PC-9 (cell line): ENCODE measurements at regions of chr22 and their contacts with region 1.

Region 1: GRCh38 chr22:43014869-43015676 is at the start of gene PACSIN2:
- DNase-seq: peak; percentile 97 to 99
- H3K4me3 ChIP-seq: peak within 1 kb of the TSS; percentile 66
- H3K27ac ChIP-seq: peak within 1 kb of the TSS; percentile 45
- H3K4me1 ChIP-seq: peaks cover 50% of the 10 kb centered on the region
- H3K27me3 ChIP-seq: no peaks in the 10 kb centered on the region
- CTCF ChIP-seq: no peak
- total RNA-seq, gene PACSIN2: 102 and 103 TPM in 2 replicates

Region 2: GRCh38 chr22:42313804-42314581 is 701.1 kb before region 1 on chr22:
- CTCF ChIA-PET with region 1: interaction called, 10 read pairs
- POLR2A ChIA-PET with region 1: no interaction called
- intact Hi-C with region 1: no loop called
- DNase-seq: peak; percentile 85 to 96
- H3K4me3 ChIP-seq: no peak overlapping the region
- H3K27ac ChIP-seq: peak overlapping the region; percentile 41
- H3K4me1 ChIP-seq: peaks cover 37% of the 10 kb centered on the region
- H3K27me3 ChIP-seq: no peaks in the 10 kb centered on the region
- CTCF ChIP-seq: peak; percentile 87

Region 3: DNA sequence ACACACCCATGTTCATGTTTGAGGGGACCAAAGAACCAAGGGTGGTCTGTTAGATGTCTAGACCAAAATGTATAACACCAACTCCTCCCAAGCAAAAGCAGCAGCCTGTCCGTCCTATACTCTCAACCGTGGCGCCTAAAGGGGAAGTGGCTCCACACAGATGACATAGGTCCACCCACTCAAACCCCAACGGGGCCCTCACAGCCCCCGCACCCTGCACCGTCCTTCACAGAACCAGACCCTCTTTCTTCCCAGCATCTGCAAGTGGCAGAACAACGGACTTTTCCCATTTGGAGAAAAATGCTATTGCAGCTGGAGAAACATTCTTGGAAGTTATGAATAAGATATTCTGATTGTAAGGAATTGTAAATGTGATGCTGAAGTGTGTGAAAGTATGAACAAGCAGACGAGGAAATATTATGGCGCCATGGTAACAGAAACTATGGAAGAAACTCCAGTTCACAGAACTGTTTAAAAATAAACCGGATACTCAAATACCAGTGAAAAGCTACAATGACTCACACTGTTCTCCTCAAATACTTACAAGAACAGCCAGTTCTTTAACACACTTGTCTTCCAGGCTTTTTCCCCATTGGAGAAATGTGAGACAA is 81.5 kb before region 1 on chr22:
- CTCF ChIA-PET with region 1: no interaction called
- POLR2A ChIA-PET with region 1: interaction called, 3 read pairs
- intact Hi-C with region 1: loop called (anchors 5 kb)
- DNase-seq: peak in 1 of 2 experiments; percentile 91
- H3K4me3 ChIP-seq: no peak overlapping the region
- H3K27ac ChIP-seq: peak overlapping the region; percentile 60
- H3K4me1 ChIP-seq: peaks cover 62% of the 10 kb centered on the region
- H3K27me3 ChIP-seq: no peaks in the 10 kb centered on the region
- CTCF ChIP-seq: no peak

Region 4: GRCh38 chr22:42978453-42979103 is 36.5 kb before region 1 on chr22:
- CTCF ChIA-PET with region 1: no interaction called
- POLR2A ChIA-PET with region 1: no interaction called
- intact Hi-C with region 1: loop called (anchors 5 kb)
- DNase-seq: peak; percentile 75 to 98
- H3K4me3 ChIP-seq: 0 out of 2 replicates have a peak overlapping the region, but pooled peaks have one; percentile 9
- H3K27ac ChIP-seq: peak overlapping the region; percentile 80
- H3K4me1 ChIP-seq: peaks cover 46% of the 10 kb centered on the region
- H3K27me3 ChIP-seq: no peaks in the 10 kb centered on the region
- CTCF ChIP-seq: no peak

Region 5: DNA sequence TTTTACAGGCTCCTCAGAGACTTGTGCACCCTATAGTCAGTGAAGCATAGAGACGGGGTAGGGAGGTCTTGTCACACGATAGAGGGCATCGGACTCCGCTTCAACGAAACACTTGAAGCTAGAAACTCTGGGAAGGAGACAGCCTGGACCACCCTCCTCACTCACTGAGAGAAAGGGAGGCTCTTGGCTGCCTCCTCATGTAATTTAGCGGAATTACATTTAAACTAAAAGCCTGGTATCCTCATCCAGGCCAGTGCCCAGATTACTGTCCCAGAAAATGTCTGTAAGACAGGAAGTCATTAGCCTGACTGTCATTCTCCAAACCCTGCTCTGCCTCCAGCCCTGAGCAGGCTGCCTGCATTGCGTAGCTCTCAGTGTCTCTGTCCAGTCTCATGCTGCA is 38.1 kb after region 1 on chr22:
- CTCF ChIA-PET with region 1: no interaction called
- POLR2A ChIA-PET with region 1: interaction called, 11 read pairs
- intact Hi-C with region 1: no loop called
- DNase-seq: no peak
- H3K4me3 ChIP-seq: no peak overlapping the region
- H3K27ac ChIP-seq: no peak overlapping the region
- H3K4me1 ChIP-seq: no peaks in the 10 kb centered on the region
- H3K27me3 ChIP-seq: no peaks in the 10 kb centered on the region
- CTCF ChIP-seq: peak; percentile 56

Region 6: DNA sequence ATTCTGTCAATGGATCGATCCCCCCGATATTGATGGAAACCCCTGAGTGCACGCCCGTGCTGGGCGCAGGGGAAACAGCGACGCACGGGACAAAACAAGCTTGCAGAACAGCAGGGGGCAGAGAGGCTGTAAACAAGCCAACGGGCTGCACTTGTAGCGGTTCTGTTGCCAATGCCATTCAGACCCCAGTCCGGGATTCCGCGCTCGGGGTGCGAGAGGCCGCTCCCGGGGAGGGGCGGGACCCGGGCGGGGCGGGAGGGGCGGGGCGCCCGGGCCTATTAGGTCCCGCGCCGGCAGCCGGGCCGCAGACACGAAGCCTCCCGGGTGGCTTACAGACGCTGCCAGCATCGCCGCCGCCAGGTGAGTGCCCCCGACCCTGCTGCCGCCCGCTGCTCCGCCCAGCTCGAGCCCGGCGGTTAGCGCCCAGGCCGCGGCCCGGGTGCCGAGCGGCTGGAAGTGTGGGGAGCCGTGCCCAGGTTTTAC is 95.4 kb after region 1 on chr22 and contains the start of gene BIK:
- CTCF ChIA-PET with region 1: no interaction called
- POLR2A ChIA-PET with region 1: no interaction called
- intact Hi-C with region 1: no loop called
- DNase-seq: peak in 1 of 2 experiments; percentile 28
- H3K4me3 ChIP-seq: peak within 1 kb of the TSS; percentile 89
- H3K27ac ChIP-seq: no peak within 1 kb of the TSS
- H3K4me1 ChIP-seq: peaks cover 23% of the 10 kb centered on the region
- H3K27me3 ChIP-seq: peaks cover 4% of the 10 kb centered on the region; the same call in 1 of the 2 replicates
- CTCF ChIP-seq: 0 out of 2 replicates have a peak, but pooled peaks have one; percentile 22
- total RNA-seq, gene BIK: 10.6 and 14.5 TPM in 2 replicates